Heart right ventricle (tissue), 16 donors: ENCODE measurements at regions of chr11 and their contacts with region 1.

Region 1: DNA sequence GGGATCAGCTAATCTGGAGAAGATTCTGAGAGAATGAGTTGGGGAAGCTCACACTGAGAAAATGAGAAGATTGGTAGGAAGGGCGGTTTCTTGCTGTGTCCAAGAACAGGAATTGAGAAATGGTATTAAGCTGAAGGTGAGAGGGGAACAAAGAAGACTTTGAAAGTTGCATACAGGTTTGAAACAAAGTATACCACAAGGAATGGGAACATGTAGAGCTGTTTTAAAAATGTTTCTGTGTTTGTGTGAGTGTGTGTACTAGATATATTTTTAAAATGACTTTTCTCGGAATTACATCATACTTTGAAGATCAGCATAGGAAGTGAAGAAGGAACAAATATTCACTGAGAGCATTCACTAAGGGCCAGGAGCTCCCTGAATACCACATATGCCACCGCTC is 24.4 kb upstream of the IZUMO1R start:
- DNase-seq: no peak
- ATAC-seq: no peak
- H3K4me3 ChIP-seq: no peak overlapping the region
- H3K27ac ChIP-seq: no peak overlapping the region
- H3K4me1 ChIP-seq: peaks cover 0 to 11% (median 0%) of the 10 kb centered on the region in 9 donors
- H3K27me3 ChIP-seq: no peaks in the 10 kb centered on the region
- CTCF ChIP-seq: no peak

Region 2: GRCh38 chr11:94211261-94211830 is 68.7 kb before region 1 on chr11:
- intact Hi-C with region 1: no loop called
- DNase-seq: no peak
- ATAC-seq: no peak
- H3K4me3 ChIP-seq: no peak overlapping the region
- H3K27ac ChIP-seq: no peak overlapping the region
- H3K4me1 ChIP-seq: no peaks in the 10 kb centered on the region
- H3K27me3 ChIP-seq: no peaks in the 10 kb centered on the region
- CTCF ChIP-seq: no peak

Region 3: GRCh38 chr11:94297985-94298576 is 18.1 kb after region 1 on chr11:
- intact Hi-C with region 1: loop called in 1 of 10 experiments (anchors 1 kb)
- DNase-seq: no peak
- ATAC-seq: no peak
- H3K4me3 ChIP-seq: no peak overlapping the region
- H3K27ac ChIP-seq: no peak overlapping the region
- H3K4me1 ChIP-seq: peaks cover 0 to under 1% (median 0%) of the 10 kb centered on the region in 9 donors
- H3K27me3 ChIP-seq: no peaks in the 10 kb centered on the region
- CTCF ChIP-seq: no peak